Activated T-helper 1 cell treated with anti-CD3 and anti-CD28 coated beads, Interleukin-12 subunit alpha, Interleukin-12 subunit beta, Interleukin-2, Interleukin-4 antibody, amounts not matched to agents 30 ng/mL and 10 ng/mL and 1 ng/mL, durations not matched to agents 14 hours and 24 hours and 36 hours (primary cell): ENCODE measurements at regions of chr11 and their contacts with region 1.

Region 1: DNA sequence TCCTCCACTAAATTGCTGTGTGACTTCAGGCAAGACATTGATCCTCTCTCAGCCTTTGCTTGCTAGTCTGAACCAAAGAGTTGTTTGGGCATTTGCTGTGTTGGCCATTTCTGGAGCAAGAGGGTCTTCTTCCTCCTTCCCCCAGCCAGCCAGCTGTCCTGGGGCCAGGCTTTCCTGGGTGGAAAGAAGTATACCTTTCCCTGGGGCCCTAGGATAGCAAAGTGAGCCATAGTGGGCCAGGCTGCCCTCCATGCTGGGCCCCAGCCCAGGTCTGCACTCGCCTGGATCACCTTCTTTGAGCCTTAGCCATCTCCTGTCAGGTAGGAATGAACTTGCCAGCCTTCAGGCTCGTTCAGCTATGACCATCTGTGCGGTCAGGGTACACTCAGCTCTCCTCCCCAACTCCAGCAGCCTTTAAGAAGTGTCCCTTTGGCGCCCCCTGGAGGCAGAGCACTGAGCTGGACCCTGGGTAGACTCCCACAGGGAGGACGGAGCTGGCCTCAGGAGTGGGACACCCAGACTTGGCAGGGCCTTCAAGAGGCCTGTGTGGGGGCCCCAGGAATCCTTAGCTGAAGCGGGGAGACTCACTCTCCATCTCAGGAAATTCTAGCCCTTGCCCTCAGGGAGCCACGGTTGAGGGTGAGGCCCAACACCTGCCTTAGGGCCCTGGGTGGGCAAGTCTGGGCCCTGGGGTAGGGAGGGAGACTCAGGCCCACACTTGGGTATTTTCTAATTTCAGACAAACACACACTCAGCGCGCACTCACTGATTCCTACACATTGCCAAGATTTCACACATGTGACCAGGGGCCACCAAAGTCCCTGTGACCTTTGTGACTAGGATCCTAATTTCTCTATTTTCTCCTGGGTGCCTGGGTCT is 35.6 kb upstream of the TPBGL start:
- DNase-seq: peak; percentile 76
- H3K4me3 Mint-ChIP-seq: no peak overlapping the region
- H3K27ac Mint-ChIP-seq: no peak overlapping the region
- H3K4me1 Mint-ChIP-seq: no peaks in the 10 kb centered on the region
- H3K27me3 Mint-ChIP-seq: peaks cover 6% of the 10 kb centered on the region

Region 2: DNA sequence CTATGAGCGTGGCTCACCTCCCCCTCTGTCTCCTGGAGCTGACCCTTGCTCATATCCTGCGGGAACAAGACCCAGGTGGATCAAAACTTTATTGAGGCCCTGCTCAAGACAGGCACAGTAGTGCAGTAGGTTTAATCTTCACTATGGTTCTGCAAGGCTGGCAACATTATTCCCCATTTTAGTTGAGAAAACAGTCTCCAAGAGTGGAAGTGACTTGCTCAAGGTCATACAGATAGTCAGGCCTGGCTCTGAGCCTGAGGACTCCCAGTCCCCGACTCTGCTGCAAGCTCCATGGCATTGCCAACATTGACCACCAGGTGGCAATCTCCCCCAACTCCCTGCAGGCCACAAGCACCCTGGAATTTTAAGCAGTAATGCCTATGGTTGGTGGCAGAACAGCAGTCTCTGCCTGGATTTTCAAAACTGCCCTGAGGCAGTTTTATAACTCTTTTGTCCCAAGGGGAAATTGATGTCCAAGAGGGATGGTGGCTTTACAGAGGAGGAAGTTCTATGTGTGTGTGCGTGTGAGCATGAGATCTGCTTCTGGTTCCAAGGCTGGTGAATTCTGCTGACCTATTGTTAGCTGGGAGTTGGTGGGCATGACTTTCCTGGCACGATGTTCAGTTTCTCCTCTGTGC is 182.0 kb before region 1 on chr11:
- intact Hi-C with region 1: loop called (anchors 1 kb)
- DNase-seq: peak; percentile 60
- H3K4me3 Mint-ChIP-seq: no peak overlapping the region
- H3K27ac Mint-ChIP-seq: no peak overlapping the region
- H3K4me1 Mint-ChIP-seq: no peaks in the 10 kb centered on the region
- H3K27me3 Mint-ChIP-seq: no peaks in the 10 kb centered on the region

Region 3: GRCh38 chr11:75078233-75078632 is 126.7 kb before region 1 on chr11:
- intact Hi-C with region 1: no loop called
- DNase-seq: no peak
- H3K4me3 Mint-ChIP-seq: no peak overlapping the region
- H3K27ac Mint-ChIP-seq: no peak overlapping the region
- H3K4me1 Mint-ChIP-seq: no peaks in the 10 kb centered on the region
- H3K27me3 Mint-ChIP-seq: peaks cover 25% of the 10 kb centered on the region

Region 4: GRCh38 chr11:75160192-75160757 is 44.6 kb before region 1 on chr11:
- intact Hi-C with region 1: no loop called
- DNase-seq: no peak
- H3K4me3 Mint-ChIP-seq: no peak overlapping the region
- H3K27ac Mint-ChIP-seq: no peak overlapping the region
- H3K4me1 Mint-ChIP-seq: peaks cover 10% of the 10 kb centered on the region
- H3K27me3 Mint-ChIP-seq: peaks cover 4% of the 10 kb centered on the region